ENCODE measurements at regions of chr12 and their contacts with region 1.

Region 1: DNA sequence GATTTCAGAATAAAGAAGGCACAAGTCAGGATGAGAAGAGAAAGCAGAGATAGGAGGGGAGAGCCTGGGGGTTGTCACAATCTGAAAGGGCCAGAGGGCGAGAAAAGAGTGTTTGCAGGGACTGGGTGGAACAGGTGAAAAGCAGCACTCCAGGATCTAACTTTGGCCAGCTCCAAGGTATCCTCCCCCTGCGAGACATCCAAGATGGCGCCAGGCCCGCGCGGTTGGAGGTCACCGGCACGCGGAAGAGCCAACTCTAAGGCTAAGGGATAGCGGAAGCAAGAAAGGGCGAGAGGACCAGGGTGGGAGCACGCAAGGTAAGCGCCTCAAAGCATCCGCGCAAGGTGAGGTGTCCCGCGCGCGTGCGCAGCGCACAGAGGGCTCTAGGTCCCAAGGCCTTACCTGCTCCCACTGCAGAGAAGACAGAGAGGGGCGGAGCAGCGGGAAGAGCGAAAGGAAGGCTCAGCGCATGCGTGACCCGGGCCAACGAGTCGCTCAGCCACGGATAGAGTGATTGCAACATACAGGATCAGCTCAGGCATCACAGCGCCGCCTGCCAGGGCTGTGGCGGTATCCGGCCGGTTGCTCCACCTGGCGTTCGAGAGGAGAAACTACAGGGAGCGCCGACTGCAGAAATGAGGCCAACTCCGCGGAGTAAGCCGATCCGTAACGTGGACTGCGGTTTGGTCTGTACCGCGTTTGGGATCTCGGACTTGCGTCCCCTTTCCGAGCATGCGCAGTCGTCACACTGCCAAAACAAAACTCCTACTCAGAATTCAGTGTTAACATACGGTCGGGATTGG is at the start of gene ATP5MC2:
- DNase-seq: peak; percentile 100
- ATAC-seq: peak; percentile 97
- H3K4me3 ChIP-seq: peak within 1 kb of the TSS; percentile 97
- H3K27ac ChIP-seq: peak within 1 kb of the TSS; percentile 88
- H3K4me1 ChIP-seq: peaks cover 7% of the 10 kb centered on the region
- H3K27me3 ChIP-seq: peaks cover 2 to 3% of the 10 kb centered on the region in 2 experiments; a peak in 1 of 4 replicates
- CTCF ChIP-seq: peak; percentile 100; a peak in 5 of 6 replicates
- EP300 ChIP-seq: no peak
- POLR2A ChIP-seq: peak; percentile 96
- RAD21 ChIP-seq: peak; percentile 89
- polyA plus RNA-seq, gene ATP5MC2: 972 to 1,090 TPM

Region 2: DNA sequence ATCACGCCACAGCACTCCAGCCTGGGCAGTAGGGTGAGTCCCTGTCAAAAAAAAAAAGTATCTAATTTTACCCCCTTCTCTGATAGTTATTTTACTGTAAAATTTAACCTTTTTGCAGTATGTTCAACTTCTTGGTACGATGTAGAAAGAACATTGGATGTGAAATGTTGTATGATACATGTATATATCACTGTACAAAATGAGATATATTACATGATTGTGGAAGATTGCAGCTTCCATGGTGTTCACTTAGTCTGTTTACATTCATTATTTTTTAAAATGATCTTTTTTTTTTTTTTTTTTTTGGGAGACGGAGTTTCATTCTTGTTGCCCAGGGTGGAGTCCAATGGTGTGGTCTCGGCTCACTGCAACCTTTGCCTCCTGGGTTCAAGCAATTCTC is 286.9 kb before region 1 on chr12:
- CTCF ChIA-PET with region 1: no interaction called
- POLR2A ChIA-PET with region 1: no interaction called
- RAD21 ChIA-PET with region 1: no interaction called
- SMC1A ChIA-PET with region 1: no interaction called
- in situ Hi-C with region 1: no loop called
- intact Hi-C with region 1: no loop called
- DNase-seq: no peak
- ATAC-seq: no peak
- H3K4me3 ChIP-seq: peak overlapping the region; percentile 15; the same call in 1 of the 2 replicates
- H3K27ac ChIP-seq: no peak overlapping the region
- H3K4me1 ChIP-seq: no peaks in the 10 kb centered on the region
- H3K27me3 ChIP-seq: no peaks in the 10 kb centered on the region
- CTCF ChIP-seq: no peak
- EP300 ChIP-seq: no peak
- POLR2A ChIP-seq: no peak
- RAD21 ChIP-seq: no peak

Region 3: DNA sequence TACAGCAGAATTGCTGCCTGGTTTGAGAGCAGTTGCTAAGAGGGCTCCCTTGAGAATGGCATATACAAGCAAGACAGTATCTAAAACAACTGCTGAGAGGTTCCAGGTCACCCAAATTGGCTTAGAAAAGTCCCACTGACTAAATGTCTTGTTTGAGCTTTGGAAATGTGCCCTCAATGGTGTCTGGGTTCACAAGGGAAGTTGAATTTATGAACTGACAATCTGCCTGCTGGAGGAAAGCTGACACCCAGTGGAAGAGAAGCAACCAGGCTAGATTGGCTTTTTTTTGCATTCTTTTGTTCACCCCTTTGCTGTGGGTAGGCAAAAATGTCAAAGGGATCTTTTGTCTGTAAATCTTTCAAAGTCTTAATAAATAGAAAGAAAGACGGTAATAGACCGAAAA is 124.0 kb before region 1 on chr12:
- CTCF ChIA-PET with region 1: interaction called, 25 read pairs
- POLR2A ChIA-PET with region 1: no interaction called
- RAD21 ChIA-PET with region 1: interaction called, 10 read pairs
- SMC1A ChIA-PET with region 1: interaction called, 16 read pairs
- in situ Hi-C with region 1: no loop called
- intact Hi-C with region 1: no loop called
- DNase-seq: no peak
- ATAC-seq: no peak; the same call in 2 of the 3 replicates
- H3K4me3 ChIP-seq: no peak overlapping the region
- H3K27ac ChIP-seq: no peak overlapping the region
- H3K4me1 ChIP-seq: no peaks in the 10 kb centered on the region
- H3K27me3 ChIP-seq: no peaks in the 10 kb centered on the region
- CTCF ChIP-seq: 0 out of 6 replicates have a peak, but pooled peaks of 1 of the 3 experiments have one; percentile 6
- EP300 ChIP-seq: no peak
- POLR2A ChIP-seq: no peak
- RAD21 ChIP-seq: no peak

Region 4: DNA sequence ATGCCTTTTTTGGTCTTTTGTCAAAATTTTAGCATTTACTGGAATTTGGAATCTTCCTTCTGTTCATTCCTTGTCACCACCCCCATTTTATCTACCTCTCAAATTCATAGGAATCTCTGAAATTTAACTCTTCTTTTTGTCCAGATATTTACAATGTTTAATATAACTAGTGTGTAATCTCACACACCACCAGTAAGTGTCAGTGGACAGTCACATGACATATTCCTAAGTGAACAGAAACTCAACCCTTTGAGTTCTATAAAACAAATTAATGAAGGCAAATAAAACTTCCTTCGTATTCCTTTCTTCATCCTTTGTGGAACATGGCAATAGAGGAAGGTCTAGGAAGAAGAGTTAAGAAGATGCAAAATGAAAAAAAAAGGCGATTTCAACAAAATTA is 76.3 kb before region 1 on chr12:
- CTCF ChIA-PET with region 1: interaction called, 4 read pairs
- POLR2A ChIA-PET with region 1: no interaction called
- RAD21 ChIA-PET with region 1: interaction called, 6 read pairs
- SMC1A ChIA-PET with region 1: no interaction called
- in situ Hi-C with region 1: no loop called
- intact Hi-C with region 1: loop called (anchors 1 kb)
- DNase-seq: no peak
- ATAC-seq: peak; percentile 55; the same call in 1 of the 3 replicates
- H3K4me3 ChIP-seq: no peak overlapping the region
- H3K27ac ChIP-seq: no peak overlapping the region
- H3K4me1 ChIP-seq: peaks cover 11% of the 10 kb centered on the region
- H3K27me3 ChIP-seq: no peaks in the 10 kb centered on the region
- CTCF ChIP-seq: no peak; a peak in 1 of 6 replicates
- EP300 ChIP-seq: no peak
- POLR2A ChIP-seq: no peak
- RAD21 ChIP-seq: peak; percentile 50; the same call in 1 of the 2 replicates

Region 5: DNA sequence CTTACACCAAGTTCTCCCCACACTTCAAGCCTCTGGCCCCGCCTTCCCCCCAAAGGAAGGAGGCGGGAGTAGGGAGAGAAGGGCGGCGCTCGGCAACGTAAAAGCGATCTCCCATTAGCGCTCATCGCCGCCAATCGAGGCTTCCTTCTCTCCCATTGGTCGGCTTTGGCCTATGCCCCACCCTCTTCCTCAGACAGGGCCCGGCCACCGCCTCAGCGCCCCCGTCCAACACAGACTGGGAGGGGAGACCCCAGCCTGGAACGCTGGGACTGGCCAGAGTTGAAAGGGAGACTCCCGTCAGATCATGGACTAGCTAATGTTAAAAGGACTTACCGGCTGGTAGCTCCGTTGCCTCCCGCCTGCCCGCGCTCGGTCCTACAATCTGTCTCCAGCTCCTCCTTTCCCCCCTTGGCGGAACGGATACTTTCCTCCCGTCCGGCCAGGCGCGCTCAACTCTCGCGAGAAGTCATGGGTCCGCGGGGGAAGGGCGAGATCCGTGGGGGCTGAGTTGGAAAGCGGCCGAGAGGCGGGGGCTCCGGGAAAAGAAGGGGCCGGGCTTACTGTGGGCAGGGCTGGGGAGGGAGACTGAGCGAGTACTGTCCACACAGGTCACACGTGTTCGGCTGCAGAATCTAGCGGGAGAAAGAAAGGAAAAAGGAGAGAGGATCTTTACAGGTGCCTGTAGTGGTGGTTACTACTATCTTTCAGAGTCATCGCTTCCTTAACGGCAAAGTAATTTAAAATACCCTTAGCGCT is 49.7 kb before region 1 on chr12 and contains the start of gene ATF7:
- CTCF ChIA-PET with region 1: interaction called, 27 read pairs
- POLR2A ChIA-PET with region 1: interaction called, 7 read pairs
- RAD21 ChIA-PET with region 1: interaction called, 39 read pairs
- SMC1A ChIA-PET with region 1: interaction called, 29 read pairs
- in situ Hi-C with region 1: no loop called
- intact Hi-C with region 1: loop called (anchors 2 kb)
- DNase-seq: peak; percentile 96
- ATAC-seq: peak; percentile 98
- H3K4me3 ChIP-seq: peak within 1 kb of the TSS; percentile 94
- H3K27ac ChIP-seq: peak within 1 kb of the TSS; percentile 96
- H3K4me1 ChIP-seq: no peaks in the 10 kb centered on the region
- H3K27me3 ChIP-seq: no peaks in the 10 kb centered on the region
- CTCF ChIP-seq: no peak
- EP300 ChIP-seq: 0 out of 4 replicates have a peak, but pooled peaks of 1 of the 2 experiments have one; percentile 23
- POLR2A ChIP-seq: peak; percentile 80
- RAD21 ChIP-seq: no peak
- polyA plus RNA-seq, gene ATF7: 21.8 to 26.8 TPM

Region 6: GRCh38 chr12:53701518-53702260 is 25.8 kb after region 1 on chr12:
- CTCF ChIA-PET with region 1: interaction called, 14 read pairs
- POLR2A ChIA-PET with region 1: no interaction called
- RAD21 ChIA-PET with region 1: interaction called, 3 read pairs
- SMC1A ChIA-PET with region 1: interaction called, 3 read pairs
- in situ Hi-C with region 1: no loop called
- intact Hi-C with region 1: no loop called
- DNase-seq: peak; percentile 20
- ATAC-seq: peak; percentile 99
- H3K4me3 ChIP-seq: no peak overlapping the region
- H3K27ac ChIP-seq: no peak overlapping the region
- H3K4me1 ChIP-seq: no peaks in the 10 kb centered on the region
- H3K27me3 ChIP-seq: peaks cover 8 to 29% of the 10 kb centered on the region in 2 experiments
- CTCF ChIP-seq: peak; percentile 96 to 99 (median 98); a peak in 5 of 6 replicates
- EP300 ChIP-seq: no peak
- POLR2A ChIP-seq: no peak
- RAD21 ChIP-seq: peak; percentile 92

Region 7: DNA sequence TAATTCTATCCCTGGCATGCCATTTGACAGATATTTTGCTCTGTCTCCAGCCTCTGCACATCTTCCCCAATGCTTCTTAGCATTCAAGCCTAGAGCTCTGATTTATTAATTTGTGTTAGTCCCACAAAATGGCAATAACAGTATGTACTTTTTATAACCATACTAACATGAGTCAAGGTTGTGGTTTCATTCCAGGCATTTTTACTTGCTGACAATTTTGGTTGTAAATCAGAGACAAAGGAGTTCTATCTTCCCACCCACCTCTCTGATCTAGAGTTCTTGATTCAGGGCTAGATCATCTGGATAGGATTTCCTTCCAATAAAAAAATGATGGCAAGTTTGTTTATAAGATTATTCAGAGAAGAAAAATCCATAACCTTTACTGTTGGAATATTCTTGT is 94.4 kb after region 1 on chr12:
- CTCF ChIA-PET with region 1: no interaction called
- POLR2A ChIA-PET with region 1: no interaction called
- RAD21 ChIA-PET with region 1: no interaction called
- SMC1A ChIA-PET with region 1: no interaction called
- in situ Hi-C with region 1: no loop called
- intact Hi-C with region 1: no loop called
- DNase-seq: no peak
- ATAC-seq: no peak
- H3K4me3 ChIP-seq: no peak overlapping the region
- H3K27ac ChIP-seq: no peak overlapping the region
- H3K4me1 ChIP-seq: no peaks in the 10 kb centered on the region
- H3K27me3 ChIP-seq: no peaks in the 10 kb centered on the region
- CTCF ChIP-seq: no peak
- EP300 ChIP-seq: no peak
- POLR2A ChIP-seq: no peak
- RAD21 ChIP-seq: no peak

Region 8: GRCh38 chr12:53984901-53985709 is 309.3 kb after region 1 on chr12 and contains the start of gene HOXC10:
- CTCF ChIA-PET with region 1: no interaction called
- POLR2A ChIA-PET with region 1: no interaction called
- RAD21 ChIA-PET with region 1: no interaction called
- SMC1A ChIA-PET with region 1: no interaction called
- in situ Hi-C with region 1: no loop called
- intact Hi-C with region 1: no loop called
- DNase-seq: peak; percentile 38
- ATAC-seq: peak; percentile 80
- H3K4me3 ChIP-seq: peak within 1 kb of the TSS; percentile 44; the same call in 1 of the 2 replicates
- H3K27ac ChIP-seq: no peak within 1 kb of the TSS
- H3K4me1 ChIP-seq: peaks cover 24% of the 10 kb centered on the region
- H3K27me3 ChIP-seq: peaks cover 30 to 50% of the 10 kb centered on the region in 2 experiments
- CTCF ChIP-seq: peak; percentile 67 to 93 (median 86)
- EP300 ChIP-seq: no peak
- POLR2A ChIP-seq: no peak
- RAD21 ChIP-seq: peak; percentile 77
- polyA plus RNA-seq, gene HOXC10: not detected